PC-3 (cell line): ENCODE measurements at regions of chr14 and their contacts with region 1.

Region 1: GRCh38 chr14:55794655-55795595 is 214.9 kb downstream of the KTN1 start:
- DNase-seq: peak; percentile 92
- ATAC-seq: peak; percentile 70
- H3K4me3 ChIP-seq: no peak overlapping the region
- H3K27ac ChIP-seq: peak overlapping the region; percentile 30
- H3K4me1 ChIP-seq: peaks cover 36% of the 10 kb centered on the region
- H3K27me3 ChIP-seq: no peaks in the 10 kb centered on the region
- CTCF ChIP-seq: no peak

Region 2: GRCh38 chr14:55297611-55298441 is 497.1 kb before region 1 on chr14:
- CTCF ChIA-PET with region 1: no interaction called
- POLR2A ChIA-PET with region 1: no interaction called
- intact Hi-C with region 1: no loop called
- DNase-seq: peak; percentile 72
- ATAC-seq: peak; percentile 62
- H3K4me3 ChIP-seq: no peak overlapping the region
- H3K27ac ChIP-seq: no peak overlapping the region
- H3K4me1 ChIP-seq: peaks cover 13% of the 10 kb centered on the region; the same call in 1 of the 2 replicates
- H3K27me3 ChIP-seq: no peaks in the 10 kb centered on the region
- CTCF ChIP-seq: peak; percentile 63

Region 3: DNA sequence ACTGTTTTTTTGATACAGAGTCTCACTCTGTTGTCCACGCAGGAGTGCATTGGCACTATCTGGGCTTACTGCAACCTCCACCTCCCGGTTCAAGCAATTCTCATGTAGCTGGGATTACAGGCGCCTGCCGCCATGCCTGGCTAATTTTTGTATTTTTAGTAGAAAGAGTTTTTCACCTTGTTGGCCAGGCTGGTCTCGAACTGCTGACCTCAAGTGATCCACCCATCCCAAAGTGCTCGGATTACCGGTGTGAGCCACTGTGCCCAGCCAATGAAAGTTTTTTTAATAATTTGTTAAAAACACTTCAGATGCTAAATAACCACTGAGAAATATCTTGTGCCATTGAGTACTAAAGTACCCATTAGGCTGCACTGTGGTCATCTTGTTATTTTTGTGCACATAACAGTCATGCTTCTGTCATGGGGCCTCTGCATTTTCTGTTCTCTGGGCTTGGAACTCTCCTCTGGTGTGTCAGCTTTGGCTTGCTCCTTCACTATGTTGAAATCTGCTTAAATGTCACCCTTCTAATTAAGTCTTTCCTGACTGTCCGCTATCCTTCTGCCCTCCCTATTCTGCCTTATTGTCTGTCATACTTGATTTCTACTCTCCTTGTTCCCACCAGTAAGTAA is 109.9 kb before region 1 on chr14:
- CTCF ChIA-PET with region 1: no interaction called
- POLR2A ChIA-PET with region 1: no interaction called
- intact Hi-C with region 1: no loop called
- DNase-seq: no peak
- ATAC-seq: no peak
- H3K4me3 ChIP-seq: no peak overlapping the region
- H3K27ac ChIP-seq: no peak overlapping the region
- H3K4me1 ChIP-seq: peaks cover 23% of the 10 kb centered on the region
- H3K27me3 ChIP-seq: no peaks in the 10 kb centered on the region
- CTCF ChIP-seq: no peak

Region 4: DNA sequence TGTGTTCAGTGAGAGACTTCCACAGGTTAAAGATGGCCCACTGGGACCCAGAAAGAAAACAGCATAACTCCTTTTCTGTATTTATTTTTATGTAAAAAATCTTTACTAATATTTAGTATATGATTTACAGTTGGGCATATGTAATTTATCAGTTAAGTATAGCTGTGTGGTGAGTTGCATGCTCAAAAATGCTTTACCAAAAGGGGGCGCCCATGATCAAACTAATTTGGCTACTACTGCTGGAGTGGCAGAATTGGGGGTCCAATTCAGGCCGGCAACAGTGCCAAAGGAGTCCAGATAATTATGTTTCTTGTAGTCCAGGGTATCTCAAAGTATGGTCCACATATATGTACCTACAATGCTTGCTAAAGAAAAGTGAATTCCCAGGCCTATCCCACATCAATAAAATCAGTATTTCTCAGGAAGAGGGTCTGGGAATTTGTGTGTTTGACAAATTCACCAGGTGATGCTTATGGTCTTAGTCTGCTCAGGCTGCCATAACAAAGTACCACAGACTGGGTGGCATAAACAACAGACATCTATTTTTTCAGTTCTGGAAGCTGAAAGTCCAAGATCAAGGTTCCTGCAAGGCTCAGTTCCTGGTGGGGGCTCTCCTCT is 62.9 kb before region 1 on chr14:
- CTCF ChIA-PET with region 1: no interaction called
- POLR2A ChIA-PET with region 1: no interaction called
- intact Hi-C with region 1: loop called (anchors 2 kb)
- DNase-seq: peak; percentile 80
- ATAC-seq: peak; percentile 57
- H3K4me3 ChIP-seq: no peak overlapping the region
- H3K27ac ChIP-seq: no peak overlapping the region
- H3K4me1 ChIP-seq: peaks cover 11% of the 10 kb centered on the region
- H3K27me3 ChIP-seq: no peaks in the 10 kb centered on the region
- CTCF ChIP-seq: peak; percentile 98

Region 5: GRCh38 chr14:55739960-55740648 is 54.8 kb before region 1 on chr14:
- CTCF ChIA-PET with region 1: no interaction called
- POLR2A ChIA-PET with region 1: no interaction called
- intact Hi-C with region 1: loop called (anchors 2 kb)
- DNase-seq: peak; percentile 71
- ATAC-seq: peak; percentile 75
- H3K4me3 ChIP-seq: no peak overlapping the region
- H3K27ac ChIP-seq: no peak overlapping the region
- H3K4me1 ChIP-seq: peaks cover 15% of the 10 kb centered on the region
- H3K27me3 ChIP-seq: no peaks in the 10 kb centered on the region
- CTCF ChIP-seq: no peak

Region 6: GRCh38 chr14:55976219-55976618 is 181.3 kb after region 1 on chr14:
- CTCF ChIA-PET with region 1: no interaction called
- POLR2A ChIA-PET with region 1: no interaction called
- intact Hi-C with region 1: no loop called
- DNase-seq: peak; percentile 37
- ATAC-seq: peak; percentile 40; the same call in 1 of the 2 replicates
- H3K4me3 ChIP-seq: no peak overlapping the region
- H3K27ac ChIP-seq: no peak overlapping the region
- H3K4me1 ChIP-seq: no peaks in the 10 kb centered on the region
- H3K27me3 ChIP-seq: no peaks in the 10 kb centered on the region
- CTCF ChIP-seq: no peak